ENCODE measurements at regions of chr3 and their contacts with region 1.

Region 1: GRCh38 chr3:71583566-71584449 is at the start of gene FOXP1:
- DNase-seq: peak; percentile 77 to 89 (median 80)
- ATAC-seq: peak; percentile 44 to 80 (median 72)
- H3K4me3 ChIP-seq: peak within 1 kb of the TSS; percentile 65 to 95 (median 82)
- H3K27ac ChIP-seq: peak within 1 kb of the TSS; percentile 92 to 99 (median 98)
- H3K4me1 ChIP-seq: peaks cover 0 to 46% (median 21%) of the 10 kb centered on the region in 12 donors
- H3K27me3 ChIP-seq: no peaks in the 10 kb centered on the region
- CTCF ChIP-seq: no peak
- POLR2A ChIP-seq: peak in 1 of 2 donors; percentile 65
- total RNA-seq, gene FOXP1: 33.0 to 67.8 (median 44.5) TPM

Region 2: DNA sequence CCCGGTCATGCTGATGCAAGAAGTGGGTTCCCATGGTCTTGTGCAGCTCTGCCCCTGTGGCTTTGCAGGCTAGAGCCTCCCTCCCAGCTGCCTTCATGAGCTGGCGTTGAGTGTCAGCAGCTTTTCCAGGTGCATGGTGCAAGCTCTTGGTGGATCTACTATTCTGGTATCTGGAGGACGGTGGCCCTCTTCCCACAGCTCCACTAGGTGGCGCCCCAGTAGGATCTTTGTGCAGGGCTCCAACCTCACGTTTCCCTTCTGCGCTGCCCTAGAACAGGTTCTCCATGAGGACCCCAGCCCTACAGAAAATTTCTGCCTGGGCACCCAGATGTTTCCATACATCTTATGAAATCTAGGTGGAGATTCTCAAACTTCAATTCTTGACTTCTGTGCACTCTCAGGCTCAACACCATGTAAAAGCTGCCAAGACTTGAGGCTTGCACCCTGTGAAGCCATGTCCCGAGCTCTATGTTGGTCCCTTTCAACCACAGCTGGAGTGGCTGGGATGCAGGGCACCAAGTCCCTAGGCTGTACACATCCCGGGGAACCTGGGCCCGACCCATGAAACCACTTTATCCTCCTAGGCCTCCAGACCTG is 1033.0 kb before region 1 on chr3:
- intact Hi-C with region 1: loop called in 7 of 10 experiments (anchors 2 to 5 kb)
- DNase-seq: peak; percentile 55 to 79 (median 66)
- ATAC-seq: peak in 3 of 4 donors; percentile 85 to 87 (median 85)
- H3K4me3 ChIP-seq: no peak overlapping the region
- H3K27ac ChIP-seq: no peak overlapping the region
- H3K4me1 ChIP-seq: no peaks in the 10 kb centered on the region
- H3K27me3 ChIP-seq: no peaks in the 10 kb centered on the region
- CTCF ChIP-seq: peak; percentile 67 to 88 (median 78)
- POLR2A ChIP-seq: no peak

Region 3: GRCh38 chr3:71006810-71007785 is 576.7 kb before region 1 on chr3:
- intact Hi-C with region 1: loop called (anchors 5 to 10 kb)
- DNase-seq: no peak
- ATAC-seq: peak in 3 of 4 donors; percentile 22 to 69 (median 65)
- H3K4me3 ChIP-seq: no peak overlapping the region
- H3K27ac ChIP-seq: peak overlapping the region in 10 of 12 donors; percentile 4 to 55 (median 32)
- H3K4me1 ChIP-seq: peaks cover 0 to 78% (median 39%) of the 10 kb centered on the region in 12 donors
- H3K27me3 ChIP-seq: no peaks in the 10 kb centered on the region
- CTCF ChIP-seq: peak in 11 of 12 donors; percentile 38 to 72 (median 55)
- POLR2A ChIP-seq: no peak

Region 4: GRCh38 chr3:71069797-71070196 is 514.0 kb before region 1 on chr3:
- intact Hi-C with region 1: loop called in 6 of 10 experiments (anchors 5 kb)
- DNase-seq: peak in 4 of 5 donors; percentile 56 to 70 (median 67)
- ATAC-seq: peak; percentile 33 to 73 (median 57)
- H3K4me3 ChIP-seq: no peak overlapping the region
- H3K27ac ChIP-seq: peak overlapping the region in 3 of 12 donors; percentile 24 to 97 (median 25)
- H3K4me1 ChIP-seq: peaks cover 5 to 67% (median 41%) of the 10 kb centered on the region in 12 donors
- H3K27me3 ChIP-seq: no peaks in the 10 kb centered on the region
- CTCF ChIP-seq: peak; percentile 28 to 75 (median 58)
- POLR2A ChIP-seq: no peak

Region 5: GRCh38 chr3:71247221-71247976 is 336.4 kb before region 1 on chr3:
- intact Hi-C with region 1: loop called in 6 of 10 experiments (anchors 5 to 10 kb)
- DNase-seq: peak in 1 of 5 donors; percentile 47
- ATAC-seq: peak; percentile 32 to 64 (median 54)
- H3K4me3 ChIP-seq: no peak overlapping the region
- H3K27ac ChIP-seq: peak overlapping the region in 6 of 12 donors; percentile 11 to 81 (median 70)
- H3K4me1 ChIP-seq: peaks cover 0 to 62% (median 35%) of the 10 kb centered on the region in 12 donors
- H3K27me3 ChIP-seq: no peaks in the 10 kb centered on the region
- CTCF ChIP-seq: peak in 3 of 12 donors; percentile 9 to 13 (median 12)
- POLR2A ChIP-seq: no peak

Region 6: DNA sequence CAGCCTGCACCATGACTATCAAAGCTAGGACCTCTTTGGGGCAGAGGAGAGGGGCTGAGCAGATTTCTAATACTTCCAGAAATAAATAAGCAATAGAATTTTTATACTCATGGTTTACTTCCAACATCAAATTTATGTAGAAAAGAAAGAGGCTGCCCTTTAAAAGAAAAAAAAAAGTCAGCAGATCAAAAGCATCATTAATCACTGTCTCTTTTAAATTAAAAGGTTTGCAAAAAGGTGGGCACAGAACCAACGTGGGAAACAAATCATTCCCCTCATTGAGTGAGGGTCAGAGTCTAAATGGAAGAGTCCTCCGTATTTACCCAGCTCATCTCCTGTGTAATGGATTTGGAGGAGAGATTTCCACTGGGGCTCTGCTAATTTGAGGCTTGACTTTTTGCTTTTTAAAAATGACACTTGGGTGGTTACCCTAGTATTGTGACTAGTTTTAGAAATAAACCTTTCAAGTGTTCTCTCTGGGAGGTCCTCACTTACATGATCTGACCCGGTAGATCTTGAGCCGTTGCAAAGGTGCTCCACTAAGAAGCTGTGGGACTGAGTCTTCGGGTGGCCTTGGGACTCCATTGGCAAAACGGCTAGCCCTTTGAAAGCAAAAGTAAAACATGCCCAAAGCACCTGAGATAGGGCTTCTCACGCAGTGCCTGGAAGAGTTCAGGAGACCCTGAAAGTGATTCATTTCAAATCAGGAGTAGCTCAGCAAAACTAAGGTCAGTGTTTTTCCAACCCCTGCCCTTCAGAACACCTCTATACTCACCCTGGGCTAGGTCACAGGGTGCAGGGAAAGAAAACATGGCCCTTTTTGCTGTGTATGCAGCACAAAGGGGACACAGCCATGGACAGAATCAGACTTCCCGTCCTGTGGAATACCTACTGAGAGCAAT is 321.2 kb before region 1 on chr3:
- intact Hi-C with region 1: no loop called
- DNase-seq: no peak
- ATAC-seq: peak in 1 of 4 donors; percentile 32
- H3K4me3 ChIP-seq: no peak overlapping the region
- H3K27ac ChIP-seq: no peak overlapping the region
- H3K4me1 ChIP-seq: peaks cover 0 to 15% (median 0%) of the 10 kb centered on the region in 12 donors
- H3K27me3 ChIP-seq: no peaks in the 10 kb centered on the region
- CTCF ChIP-seq: no peak
- POLR2A ChIP-seq: no peak

Region 7: DNA sequence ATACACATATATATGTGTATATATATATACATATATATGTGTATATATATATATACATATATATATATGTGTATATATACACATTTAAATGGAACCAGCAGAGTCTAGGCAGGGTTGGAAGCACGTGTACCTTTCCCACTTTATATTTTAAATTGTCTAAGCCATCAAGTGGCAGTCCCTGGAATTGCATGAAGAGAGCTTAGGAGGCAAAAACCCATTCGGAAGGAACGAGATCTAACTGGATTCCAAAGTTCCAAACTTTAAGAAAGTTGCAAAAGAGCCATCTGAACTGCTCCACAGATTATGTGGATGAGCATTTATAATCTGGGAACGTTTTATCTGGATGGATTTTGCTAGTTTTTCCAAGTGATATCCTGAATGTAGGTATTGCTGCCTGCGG is 186.8 kb before region 1 on chr3:
- intact Hi-C with region 1: loop called in 1 of 10 experiments (anchors 10 kb)
- DNase-seq: peak in 1 of 5 donors; percentile 18
- ATAC-seq: no peak
- H3K4me3 ChIP-seq: no peak overlapping the region
- H3K27ac ChIP-seq: no peak overlapping the region
- H3K4me1 ChIP-seq: peaks cover 0 to 63% (median 7%) of the 10 kb centered on the region in 12 donors
- H3K27me3 ChIP-seq: no peaks in the 10 kb centered on the region
- CTCF ChIP-seq: peak; percentile 39 to 61 (median 54)
- POLR2A ChIP-seq: no peak

Region 8: DNA sequence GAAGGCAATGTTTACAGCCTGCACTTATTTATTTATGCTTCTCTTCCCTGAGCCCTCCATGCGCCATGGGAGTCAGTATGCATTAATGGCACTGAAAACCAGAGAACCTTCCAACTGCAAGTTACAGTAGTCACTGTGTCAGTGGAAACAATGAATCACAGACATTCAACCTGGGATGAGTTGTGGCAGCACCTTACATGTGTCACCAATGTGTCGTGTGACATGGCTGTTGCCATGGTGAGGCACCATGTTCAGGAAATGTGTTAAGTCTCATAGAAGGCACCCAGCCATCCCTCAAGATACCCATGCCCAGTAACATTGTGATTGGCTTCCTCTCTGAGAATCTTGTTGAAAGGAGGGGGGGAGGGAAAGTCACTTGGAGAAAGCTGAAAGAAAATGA is 105.2 kb before region 1 on chr3:
- intact Hi-C with region 1: no loop called
- DNase-seq: no peak
- ATAC-seq: no peak
- H3K4me3 ChIP-seq: no peak overlapping the region
- H3K27ac ChIP-seq: no peak overlapping the region
- H3K4me1 ChIP-seq: peaks cover 0 to 9% (median 0%) of the 10 kb centered on the region in 12 donors
- H3K27me3 ChIP-seq: no peaks in the 10 kb centered on the region
- CTCF ChIP-seq: no peak
- POLR2A ChIP-seq: no peak

Region 9: DNA sequence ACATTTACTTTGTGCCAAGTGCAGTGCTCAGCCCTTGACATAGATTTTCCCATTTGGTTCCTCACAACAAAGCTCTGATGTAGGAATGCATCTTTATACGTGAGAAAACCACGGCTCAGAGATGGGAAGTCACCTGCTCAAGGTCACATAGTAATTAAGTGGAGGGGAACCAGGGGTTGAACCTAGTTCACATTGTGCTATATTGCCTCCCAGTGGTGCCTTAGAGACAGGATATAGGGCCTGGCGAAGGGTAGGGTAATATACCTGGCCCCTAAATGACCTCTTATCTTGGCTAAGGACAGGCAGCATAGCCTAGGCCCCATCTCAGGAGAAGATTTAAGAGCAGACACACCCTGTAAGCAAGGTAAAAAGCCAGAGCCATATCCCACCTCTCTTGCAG is 71.8 kb before region 1 on chr3:
- intact Hi-C with region 1: loop called in 1 of 10 experiments (anchors 10 kb)
- DNase-seq: no peak
- ATAC-seq: peak in 2 of 4 donors; percentile 25 to 48
- H3K4me3 ChIP-seq: no peak overlapping the region
- H3K27ac ChIP-seq: peak overlapping the region in 1 of 12 donors; percentile 7
- H3K4me1 ChIP-seq: peaks cover 0 to 43% (median 6%) of the 10 kb centered on the region in 12 donors
- H3K27me3 ChIP-seq: no peaks in the 10 kb centered on the region
- CTCF ChIP-seq: peak in 3 of 12 donors; percentile 7 to 16 (median 11)
- POLR2A ChIP-seq: no peak

Region 10: DNA sequence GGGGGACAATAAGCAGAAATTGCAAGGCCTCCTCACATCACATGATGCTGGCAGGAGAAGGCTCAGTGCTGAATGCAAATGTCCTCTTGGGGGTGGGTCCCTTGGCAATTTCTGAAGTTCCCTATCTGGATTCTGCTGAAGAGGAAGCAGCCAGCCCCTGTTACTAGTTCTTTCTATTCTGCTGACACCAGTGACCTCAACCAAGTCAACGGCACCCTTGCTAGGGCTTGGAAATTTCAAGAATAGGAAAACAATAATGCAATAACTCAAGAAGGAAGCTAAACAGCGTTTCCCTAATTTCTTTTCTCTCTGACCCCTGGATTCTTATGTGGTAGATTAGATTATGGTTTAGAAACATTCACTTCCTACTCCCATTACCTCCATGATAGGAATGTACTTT is 45.9 kb after region 1 on chr3:
- intact Hi-C with region 1: no loop called
- DNase-seq: peak in 4 of 5 donors; percentile 16 to 51 (median 33)
- ATAC-seq: peak in 3 of 4 donors; percentile 50 to 76 (median 62)
- H3K4me3 ChIP-seq: no peak overlapping the region
- H3K27ac ChIP-seq: peak overlapping the region in 1 of 12 donors; percentile 72
- H3K4me1 ChIP-seq: peaks cover 0 to 17% (median 0%) of the 10 kb centered on the region in 12 donors
- H3K27me3 ChIP-seq: no peaks in the 10 kb centered on the region
- CTCF ChIP-seq: no peak
- POLR2A ChIP-seq: no peak

Region 11: GRCh38 chr3:71753630-71754483 is 170.0 kb after region 1 on chr3 and contains the start of gene GPR27:
- intact Hi-C with region 1: no loop called
- DNase-seq: peak in 1 of 5 donors; percentile 31
- ATAC-seq: peak in 3 of 4 donors; percentile 30 to 65 (median 64)
- H3K4me3 ChIP-seq: peak within 1 kb of the TSS in 10 of 12 donors; percentile 41 to 67 (median 53)
- H3K27ac ChIP-seq: no peak within 1 kb of the TSS
- H3K4me1 ChIP-seq: peaks cover 0 to 17% (median 0%) of the 10 kb centered on the region in 12 donors
- H3K27me3 ChIP-seq: peaks cover 0 to 35% (median 12%) of the 10 kb centered on the region in 9 donors
- CTCF ChIP-seq: no peak
- POLR2A ChIP-seq: no peak
- total RNA-seq, gene GPR27: 2.0 to 8.0 (median 5.8) TPM

Measured in heart left ventricle (tissue), 16 donors.